KBM-7 (cell line): ENCODE measurements at regions of chr19 and their contacts with region 1.

Region 1: DNA sequence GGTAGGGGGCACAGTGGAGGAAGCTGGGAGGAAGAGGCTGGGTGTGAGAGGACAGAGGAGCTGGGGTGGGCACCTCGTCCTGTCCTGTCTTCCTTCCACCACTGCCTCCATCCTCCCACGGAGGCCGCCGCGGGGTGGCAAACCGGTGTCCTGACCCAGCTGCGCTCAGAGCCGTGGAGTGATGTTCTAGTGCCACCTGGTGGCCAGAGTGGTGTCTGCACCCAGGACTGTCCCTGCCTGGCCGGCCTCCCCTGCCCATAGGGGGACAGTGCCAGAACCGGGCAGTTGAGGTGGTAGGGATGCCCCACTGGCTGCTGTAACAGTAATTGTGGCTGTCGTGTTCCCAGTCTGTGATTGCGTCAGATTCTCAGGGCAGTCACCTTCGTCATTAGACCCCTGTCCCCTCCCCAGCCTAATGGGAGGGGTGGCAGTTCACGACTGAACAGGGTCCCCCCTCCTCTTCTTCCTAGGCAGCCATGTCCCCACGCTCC is 11.1 kb upstream of the ARRDC2 start:
- DNase-seq: peak; percentile 87

Region 2: DNA sequence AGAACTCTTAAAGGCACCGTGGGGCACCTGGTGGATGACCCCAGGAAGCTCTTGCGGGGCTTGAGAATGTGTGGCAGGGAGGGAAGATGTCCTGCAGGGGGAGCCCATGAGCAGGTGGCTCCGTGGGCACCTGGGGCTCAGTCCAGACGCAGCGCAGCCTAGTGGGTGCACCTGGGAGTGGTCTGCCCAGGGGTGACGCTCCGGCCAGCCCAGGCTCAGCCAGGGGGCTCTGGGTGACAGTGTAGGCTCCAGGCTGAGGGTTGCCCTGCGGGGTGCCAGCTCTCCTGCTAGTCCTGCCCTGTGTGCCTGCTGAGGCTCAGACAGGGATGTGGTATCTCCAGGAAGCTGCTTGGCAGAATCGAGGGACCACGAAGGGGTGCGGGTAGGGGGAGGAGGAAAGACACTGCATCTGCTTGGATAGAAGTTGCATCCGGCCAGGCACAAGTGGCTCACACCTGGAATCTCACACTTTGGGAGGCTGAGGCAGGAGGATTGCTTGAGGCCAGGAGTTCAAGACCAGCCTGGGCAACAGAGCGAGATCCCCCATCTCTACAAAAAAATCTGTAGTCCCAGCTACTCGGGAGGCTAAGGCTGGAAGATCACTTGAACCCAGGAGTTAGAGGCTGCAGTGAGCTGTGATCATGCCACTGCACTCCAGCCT is 500.4 kb before region 1 on chr19:
- in situ Hi-C with region 1: no loop called
- DNase-seq: peak; percentile 93

Region 3: GRCh38 chr19:17947815-17948513 is 48.9 kb before region 1 on chr19:
- in situ Hi-C with region 1: loop called (anchors 10 kb)
- DNase-seq: peak; percentile 92